ENCODE measurements at regions of chr1 and their contacts with region 1.

Region 1: DNA sequence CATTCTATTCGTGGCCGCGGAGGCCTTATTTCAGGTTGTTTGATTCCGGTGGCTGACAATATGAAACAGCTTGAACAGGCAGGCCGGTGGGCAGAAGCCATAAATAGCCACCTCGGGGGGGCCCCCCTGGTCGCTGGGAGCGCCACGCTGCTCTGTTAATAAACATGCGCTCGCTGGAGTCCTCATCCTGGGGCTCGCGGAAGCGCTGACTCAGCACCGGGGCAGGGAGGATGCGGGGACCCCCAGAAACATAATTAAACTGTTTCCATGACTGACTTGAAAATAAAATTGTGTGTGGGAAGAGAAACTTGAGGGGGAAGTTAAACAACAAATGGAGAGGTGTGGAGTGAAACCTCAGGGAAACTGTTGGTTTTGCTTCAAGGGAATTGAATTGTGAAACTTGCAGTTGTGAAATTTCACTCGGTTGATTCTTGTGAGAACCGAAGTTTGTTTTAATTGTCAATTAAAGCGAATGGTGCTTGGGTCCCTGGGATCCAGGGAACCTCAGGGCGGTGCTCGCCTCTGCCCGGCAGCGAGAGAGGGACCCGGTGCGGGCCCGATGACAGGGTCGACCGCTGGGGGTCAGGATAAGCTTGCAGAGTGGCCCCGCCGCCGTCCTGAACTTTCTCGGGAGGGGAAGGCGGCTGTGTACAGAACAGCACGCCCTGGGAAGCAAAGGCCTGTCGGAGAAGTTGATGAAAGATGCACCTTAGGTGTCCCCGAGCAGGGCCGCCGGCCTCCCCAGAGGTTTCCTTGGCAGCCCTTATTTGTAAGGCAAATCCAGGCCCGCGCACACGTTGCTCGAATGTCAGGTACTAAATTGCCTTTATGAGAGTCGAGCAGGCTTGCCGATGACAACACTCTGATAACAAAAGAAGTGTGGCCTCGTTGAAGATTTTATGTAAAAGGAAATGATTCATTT is 176.9 kb upstream of the LMO4 start:
- DNase-seq: peak; percentile 69
- ATAC-seq: peak; percentile 74
- H3K4me3 Mint-ChIP-seq: peak overlapping the region; percentile 61
- H3K27ac Mint-ChIP-seq: peak overlapping the region; percentile 48
- H3K4me1 Mint-ChIP-seq: peaks cover 15% of the 10 kb centered on the region
- H3K27me3 Mint-ChIP-seq: peaks cover 48% of the 10 kb centered on the region

Region 2: GRCh38 chr1:86846166-86846647 is 305.6 kb before region 1 on chr1:
- CTCF ChIA-PET with region 1: no interaction called
- POLR2A ChIA-PET with region 1: no interaction called
- intact Hi-C with region 1: no loop called
- DNase-seq: no peak
- ATAC-seq: peak; percentile 44
- H3K4me3 Mint-ChIP-seq: no peak overlapping the region
- H3K27ac Mint-ChIP-seq: no peak overlapping the region
- H3K4me1 Mint-ChIP-seq: peaks cover 5% of the 10 kb centered on the region
- H3K27me3 Mint-ChIP-seq: no peaks in the 10 kb centered on the region

Region 3: DNA sequence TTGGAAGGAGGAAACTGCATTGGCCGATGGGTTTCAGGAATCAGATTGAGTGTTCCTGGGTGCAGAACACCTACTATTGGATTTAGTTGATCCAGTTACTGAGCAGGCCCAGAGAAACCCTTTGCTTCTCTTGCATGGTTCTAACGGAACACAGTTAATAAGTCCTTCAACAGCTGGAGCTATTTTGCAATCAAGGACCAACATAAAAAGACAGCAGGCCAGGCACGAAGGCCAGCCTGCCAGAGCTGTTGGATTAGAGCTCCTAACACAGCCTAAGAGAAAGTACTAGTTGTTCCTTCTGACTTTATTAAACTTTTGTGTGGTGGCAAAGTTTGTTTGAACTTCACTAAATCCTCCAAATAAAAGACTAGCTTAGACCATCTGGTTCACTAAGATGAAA is 28.9 kb after region 1 on chr1:
- CTCF ChIA-PET with region 1: no interaction called
- POLR2A ChIA-PET with region 1: no interaction called
- intact Hi-C with region 1: no loop called
- DNase-seq: no peak
- ATAC-seq: no peak
- H3K4me3 Mint-ChIP-seq: no peak overlapping the region
- H3K27ac Mint-ChIP-seq: no peak overlapping the region
- H3K4me1 Mint-ChIP-seq: no peaks in the 10 kb centered on the region
- H3K27me3 Mint-ChIP-seq: peaks cover 19% of the 10 kb centered on the region

Region 4: GRCh38 chr1:87274851-87275250 is 123.1 kb after region 1 on chr1:
- CTCF ChIA-PET with region 1: no interaction called
- POLR2A ChIA-PET with region 1: no interaction called
- intact Hi-C with region 1: loop called in 1 of 2 experiments (anchors 5 kb)
- DNase-seq: no peak
- ATAC-seq: no peak
- H3K4me3 Mint-ChIP-seq: no peak overlapping the region
- H3K27ac Mint-ChIP-seq: no peak overlapping the region
- H3K4me1 Mint-ChIP-seq: no peaks in the 10 kb centered on the region
- H3K27me3 Mint-ChIP-seq: no peaks in the 10 kb centered on the region

Region 5: GRCh38 chr1:87402241-87403002 is 250.7 kb after region 1 on chr1:
- CTCF ChIA-PET with region 1: no interaction called
- POLR2A ChIA-PET with region 1: no interaction called
- intact Hi-C with region 1: loop called in 1 of 2 experiments (anchors 5 kb)
- DNase-seq: no peak
- ATAC-seq: no peak
- H3K4me3 Mint-ChIP-seq: no peak overlapping the region
- H3K27ac Mint-ChIP-seq: no peak overlapping the region
- H3K4me1 Mint-ChIP-seq: peaks cover 17% of the 10 kb centered on the region
- H3K27me3 Mint-ChIP-seq: peaks cover 17% of the 10 kb centered on the region